ENCODE measurements at regions of chr5 and their contacts with region 1.

Region 1: DNA sequence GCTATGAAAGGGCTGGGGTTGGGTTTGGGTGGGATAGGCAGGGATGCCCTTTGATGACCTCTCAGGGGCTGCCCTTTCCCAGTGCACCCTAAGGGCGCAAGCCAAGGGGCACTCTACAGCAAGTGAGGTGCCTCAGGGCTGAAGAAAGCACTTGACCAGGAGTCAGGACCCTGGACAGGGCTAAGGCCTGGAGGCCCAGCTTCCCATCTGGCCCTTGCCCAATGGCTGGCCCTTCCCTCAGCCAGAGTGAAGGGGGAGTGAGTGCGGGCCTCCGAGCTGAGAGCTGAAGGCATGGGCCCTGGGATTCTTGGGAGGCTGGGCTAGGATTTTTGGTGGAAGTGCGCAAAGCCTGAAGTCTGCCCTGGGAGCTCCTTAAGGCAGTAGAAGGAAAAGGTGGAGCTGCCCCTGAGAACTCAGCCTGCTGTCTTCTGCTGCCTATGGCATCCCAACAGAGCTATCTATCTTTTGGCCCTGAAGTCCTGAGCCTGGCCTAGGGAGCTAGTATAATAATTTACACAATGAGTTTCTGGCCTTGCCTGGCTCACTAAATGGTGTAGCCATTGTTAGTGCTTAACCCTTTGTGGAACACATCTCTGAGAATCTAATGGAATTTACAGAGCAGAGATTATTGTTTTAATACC is 16.4 kb downstream of the JADE2 start:
- DNase-seq: peak in 1 of 2 experiments; percentile 85
- H3K4me3 ChIP-seq: no peak overlapping the region
- H3K27ac ChIP-seq: no peak overlapping the region
- H3K4me1 ChIP-seq: peaks cover 6 to 17% (median 9%) of the 10 kb centered on the region in 4 experiments
- H3K27me3 ChIP-seq: no peaks in the 10 kb centered on the region
- CTCF ChIP-seq: no peak
- EP300 ChIP-seq: no peak
- POLR2A ChIP-seq: no peak
- RAD21 ChIP-seq: peak in 1 of 2 experiments; percentile 23; a peak in 2 of 4 replicates

Region 2: DNA sequence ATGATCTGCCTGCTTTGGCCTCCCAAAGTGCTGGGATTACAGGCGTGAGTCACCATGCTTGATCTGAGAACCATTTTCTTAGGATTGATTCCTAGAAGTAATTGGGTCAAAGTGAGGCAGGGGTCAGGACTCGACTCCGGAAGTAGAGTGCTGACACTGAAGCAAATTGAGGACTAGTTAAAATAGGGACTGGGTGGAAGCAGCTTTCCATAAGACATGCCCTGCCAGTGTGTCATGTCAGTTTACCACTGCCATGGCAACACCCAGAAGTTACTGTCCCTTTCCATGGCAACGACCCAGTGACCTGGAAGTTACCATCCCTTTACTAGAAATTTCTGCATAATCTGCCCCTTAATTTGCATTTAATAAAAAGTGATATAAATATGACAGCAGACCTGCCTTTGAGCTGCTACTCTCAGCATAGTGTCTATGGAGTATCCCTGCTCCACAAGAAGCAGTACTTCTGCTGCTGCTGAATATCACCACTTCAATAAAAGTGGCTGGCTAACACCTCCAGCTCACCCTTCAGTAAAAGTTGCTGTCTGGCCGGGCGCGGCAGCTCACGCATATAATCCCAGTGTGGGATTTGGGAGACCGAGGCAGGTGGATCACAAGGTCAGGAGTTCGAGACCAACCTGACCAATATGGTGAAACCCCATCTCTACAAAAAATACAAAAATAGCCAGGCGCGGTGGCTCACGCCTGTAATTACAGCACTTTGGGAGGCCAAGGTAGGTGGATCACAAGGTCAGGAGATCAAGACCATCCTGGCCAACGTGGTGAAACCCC is 64.2 kb before region 1 on chr5:
- CTCF ChIA-PET with region 1: no interaction called
- POLR2A ChIA-PET with region 1: no interaction called
- DNase-seq: no peak
- H3K4me3 ChIP-seq: no peak overlapping the region
- H3K27ac ChIP-seq: no peak overlapping the region
- H3K4me1 ChIP-seq: no peaks in the 10 kb centered on the region
- H3K27me3 ChIP-seq: no peaks in the 10 kb centered on the region
- CTCF ChIP-seq: no peak
- EP300 ChIP-seq: no peak
- POLR2A ChIP-seq: no peak
- RAD21 ChIP-seq: no peak

Region 3: DNA sequence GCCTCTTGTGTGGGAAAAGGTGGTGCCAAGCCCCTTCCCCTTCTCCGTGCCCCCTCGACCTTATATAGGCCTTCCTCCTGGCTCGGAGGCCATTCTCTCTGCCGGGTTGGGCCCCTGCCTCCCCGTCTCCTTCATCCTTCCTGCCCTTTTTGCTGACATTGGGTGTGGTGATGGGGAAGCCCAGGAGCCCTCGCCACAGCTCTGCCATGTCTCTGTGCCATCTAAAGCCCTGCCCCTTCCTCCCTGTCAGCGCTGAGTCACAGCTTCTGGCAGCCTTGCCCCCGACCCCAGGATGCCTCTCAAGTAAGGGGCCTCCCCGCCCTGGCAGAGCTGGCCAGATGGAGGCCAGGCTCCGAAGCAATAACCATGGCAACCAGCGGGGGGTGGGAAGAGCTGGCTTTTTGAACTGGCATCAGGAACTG is 14.0 kb after region 1 on chr5:
- CTCF ChIA-PET with region 1: interaction called, 39 read pairs
- POLR2A ChIA-PET with region 1: interaction called, 8 read pairs
- DNase-seq: peak in 1 of 2 experiments; percentile 72
- H3K4me3 ChIP-seq: no peak overlapping the region
- H3K27ac ChIP-seq: no peak overlapping the region
- H3K4me1 ChIP-seq: peaks cover 0 to 9% (median 1%) of the 10 kb centered on the region in 4 experiments; a peak in 4 of 7 replicates
- H3K27me3 ChIP-seq: no peaks in the 10 kb centered on the region
- CTCF ChIP-seq: peak; percentile 12 to 24 (median 15); a peak in 3 of 4 replicates
- EP300 ChIP-seq: no peak
- POLR2A ChIP-seq: no peak
- RAD21 ChIP-seq: peak; percentile 5 to 28; a peak in 1 of 4 replicates

Region 4: DNA sequence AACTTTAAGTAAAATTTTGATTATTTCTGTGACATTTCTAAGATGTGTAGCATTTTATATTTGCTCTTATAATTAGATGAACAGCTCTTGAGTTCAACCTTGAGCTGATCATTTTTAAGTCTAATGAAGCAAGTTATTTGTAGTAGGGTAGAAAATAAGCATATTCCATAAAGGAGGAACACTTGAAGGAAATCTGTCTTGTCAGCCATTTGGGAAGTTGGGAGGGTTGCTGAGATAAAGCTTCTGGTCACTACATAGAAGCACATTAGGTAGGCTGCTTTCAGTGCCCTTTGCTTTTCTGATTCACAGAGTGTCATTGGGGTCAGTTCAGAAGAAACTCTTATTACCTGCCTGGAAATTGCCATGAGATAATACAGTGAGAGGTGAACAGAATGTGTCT is 150.9 kb after region 1 on chr5:
- CTCF ChIA-PET with region 1: no interaction called
- POLR2A ChIA-PET with region 1: no interaction called
- DNase-seq: no peak
- H3K4me3 ChIP-seq: no peak overlapping the region
- H3K27ac ChIP-seq: no peak overlapping the region
- H3K4me1 ChIP-seq: no peaks in the 10 kb centered on the region
- H3K27me3 ChIP-seq: no peaks in the 10 kb centered on the region
- CTCF ChIP-seq: no peak
- EP300 ChIP-seq: no peak
- POLR2A ChIP-seq: no peak
- RAD21 ChIP-seq: no peak

Measured in H1 (cell line).